B cell (primary cell): ENCODE measurements at regions of chr13 and their contacts with region 1.

Region 1: DNA sequence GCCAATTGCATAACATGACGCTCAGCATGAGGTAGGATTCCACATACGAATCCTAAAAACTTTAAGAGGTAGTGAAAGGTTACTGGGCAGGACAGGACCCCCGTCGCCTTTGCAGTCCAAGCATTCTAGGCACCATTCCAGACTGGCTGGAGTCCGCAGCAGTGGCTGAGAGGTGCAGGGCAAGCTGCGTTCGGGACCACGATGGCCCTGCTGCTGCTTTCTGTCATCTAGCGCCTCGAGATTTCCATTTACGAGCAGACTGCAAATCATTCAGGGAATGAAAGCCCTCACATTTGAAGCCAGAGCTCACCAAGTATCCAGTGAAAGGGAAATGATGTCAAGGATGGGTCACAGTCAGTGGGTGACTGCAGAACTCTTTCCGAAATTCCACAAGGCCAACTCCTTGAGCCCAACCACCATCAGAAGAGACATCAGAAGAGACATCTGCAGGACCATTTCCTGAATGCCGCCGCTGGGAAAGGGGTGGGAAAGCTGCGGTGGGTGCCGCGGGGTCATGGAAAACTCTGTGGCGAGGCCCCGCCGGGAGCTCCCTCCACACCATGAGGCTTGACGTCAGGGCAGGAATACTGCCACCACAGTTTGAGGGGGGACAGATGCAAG is 88.3 kb downstream of the COL4A1 start:
- DNase-seq: no peak
- ATAC-seq: no peak
- H3K4me3 ChIP-seq: no peak overlapping the region
- H3K4me3 Mint-ChIP-seq: no peak overlapping the region
- H3K27ac ChIP-seq: no peak overlapping the region
- H3K27ac Mint-ChIP-seq: no peak overlapping the region
- H3K4me1 ChIP-seq: no peaks in the 10 kb centered on the region
- H3K4me1 Mint-ChIP-seq: no peaks in the 10 kb centered on the region
- H3K27me3 ChIP-seq: peaks cover 0 to 3% (median 0%) of the 10 kb centered on the region in 4 experiments
- H3K27me3 Mint-ChIP-seq: peaks cover 3% of the 10 kb centered on the region
- CTCF ChIP-seq: no peak

Region 2: DNA sequence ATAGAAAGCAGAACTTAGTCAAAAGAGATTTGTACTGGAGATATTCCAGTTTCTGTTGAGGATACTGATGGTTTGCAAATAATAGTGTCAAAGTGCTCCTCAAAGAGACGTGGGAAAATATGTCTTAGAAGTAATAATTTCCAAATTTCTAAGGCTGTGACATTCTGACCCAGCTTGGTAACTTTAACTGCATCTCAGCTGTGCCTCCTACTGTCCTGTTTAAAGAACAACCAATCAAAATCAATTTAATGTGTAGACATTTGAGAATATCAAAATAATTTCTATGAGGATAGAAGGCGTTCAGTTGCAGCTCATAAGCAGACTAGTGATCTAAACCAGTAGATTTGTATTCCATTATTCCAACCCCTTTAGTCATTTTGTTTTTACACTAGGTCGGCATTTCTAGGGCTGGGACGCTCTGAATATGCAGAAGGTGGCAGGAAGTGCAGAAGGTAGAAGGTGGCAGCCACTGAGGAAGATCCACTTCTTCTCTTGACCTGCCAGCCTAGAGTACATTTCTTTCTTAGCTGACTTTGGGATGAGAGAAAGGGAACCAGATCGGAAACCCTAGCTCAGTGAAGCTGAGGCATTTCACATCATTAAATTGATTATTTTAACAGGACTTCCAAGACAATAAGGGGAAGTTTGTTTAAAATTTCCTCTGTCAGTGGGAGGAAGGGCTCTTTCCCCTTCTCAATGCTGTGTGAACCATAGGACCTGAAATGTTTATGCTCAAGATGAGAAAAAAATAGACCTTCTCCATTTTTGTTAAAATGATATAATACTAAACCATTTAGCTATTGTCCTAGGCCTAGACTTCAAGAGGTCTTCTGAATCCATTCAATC is 20.8 kb after region 1 on chr13:
- CTCF ChIA-PET with region 1: interaction called, 17 read pairs
- POLR2A ChIA-PET with region 1: no interaction called
- intact Hi-C with region 1: no loop called
- DNase-seq: no peak
- ATAC-seq: no peak
- H3K4me3 ChIP-seq: no peak overlapping the region
- H3K4me3 Mint-ChIP-seq: no peak overlapping the region
- H3K27ac ChIP-seq: no peak overlapping the region
- H3K27ac Mint-ChIP-seq: no peak overlapping the region
- H3K4me1 ChIP-seq: no peaks in the 10 kb centered on the region
- H3K4me1 Mint-ChIP-seq: no peaks in the 10 kb centered on the region
- H3K27me3 ChIP-seq: no peaks in the 10 kb centered on the region
- H3K27me3 Mint-ChIP-seq: peaks cover 18% of the 10 kb centered on the region
- CTCF ChIP-seq: no peak

Region 3: GRCh38 chr13:110412132-110412914 is 193.6 kb after region 1 on chr13:
- CTCF ChIA-PET with region 1: interaction called, 59 read pairs
- POLR2A ChIA-PET with region 1: no interaction called
- intact Hi-C with region 1: no loop called
- DNase-seq: peak; percentile 63
- ATAC-seq: peak; percentile 83
- H3K4me3 ChIP-seq: no peak overlapping the region
- H3K4me3 Mint-ChIP-seq: no peak overlapping the region
- H3K27ac ChIP-seq: no peak overlapping the region
- H3K27ac Mint-ChIP-seq: no peak overlapping the region
- H3K4me1 ChIP-seq: peaks cover 0 to 3% of the 10 kb centered on the region in 2 donors
- H3K4me1 Mint-ChIP-seq: peaks cover 4% of the 10 kb centered on the region
- H3K27me3 ChIP-seq: peaks cover 0 to 15% (median 6%) of the 10 kb centered on the region in 4 experiments
- H3K27me3 Mint-ChIP-seq: peaks cover 40% of the 10 kb centered on the region
- CTCF ChIP-seq: peak; percentile 84

Region 4: DNA sequence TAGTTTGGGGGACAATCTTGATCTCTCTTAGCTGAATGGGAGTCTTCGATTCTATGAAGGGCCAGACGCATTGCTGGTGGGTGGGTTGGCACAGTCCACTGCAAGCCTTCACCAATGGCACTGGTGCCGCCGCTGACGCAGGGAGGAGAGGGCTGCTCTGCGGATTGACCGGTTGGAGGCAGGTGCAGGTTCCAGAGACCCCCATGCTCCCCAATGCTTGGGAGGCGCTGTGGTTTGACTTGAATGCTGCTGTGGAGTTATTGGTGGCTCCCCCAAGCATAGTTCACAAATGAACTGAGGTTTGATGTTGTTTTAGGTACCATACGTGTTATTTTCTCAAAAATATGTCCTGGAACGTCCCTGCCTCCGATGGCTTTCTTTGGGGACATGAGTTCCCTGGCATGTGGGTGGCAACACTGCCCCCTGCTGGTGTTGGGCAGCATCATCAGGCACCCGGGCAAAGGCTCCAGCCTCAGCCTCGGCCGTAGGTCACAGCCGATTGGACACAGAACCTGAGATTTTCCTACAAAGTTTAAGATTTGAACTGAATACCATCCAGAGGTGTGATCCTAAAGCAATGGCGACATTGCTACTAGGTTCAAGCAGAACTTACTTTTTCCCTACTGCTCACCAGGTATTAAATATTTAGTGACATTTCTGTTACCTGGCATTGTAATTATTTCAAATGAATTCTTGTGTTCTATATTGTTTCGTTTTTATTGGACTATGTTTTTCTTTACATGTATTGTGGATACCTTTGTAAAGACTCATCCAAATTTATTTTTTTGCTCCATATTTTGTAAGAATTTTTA is 600.7 kb after region 1 on chr13:
- CTCF ChIA-PET with region 1: interaction called, 6 read pairs
- POLR2A ChIA-PET with region 1: no interaction called
- intact Hi-C with region 1: loop called (anchors 5 kb)
- DNase-seq: peak; percentile 82
- ATAC-seq: peak; percentile 84
- H3K4me3 ChIP-seq: no peak overlapping the region
- H3K4me3 Mint-ChIP-seq: no peak overlapping the region
- H3K27ac ChIP-seq: no peak overlapping the region
- H3K27ac Mint-ChIP-seq: no peak overlapping the region
- H3K4me1 ChIP-seq: peaks cover 0 to 7% of the 10 kb centered on the region in 2 donors
- H3K4me1 Mint-ChIP-seq: peaks cover 3% of the 10 kb centered on the region
- H3K27me3 ChIP-seq: peaks cover 0 to 3% (median 0%) of the 10 kb centered on the region in 4 experiments
- H3K27me3 Mint-ChIP-seq: peaks cover 8% of the 10 kb centered on the region
- CTCF ChIP-seq: peak; percentile 99

Region 5: GRCh38 chr13:111216166-111216960 is 997.7 kb after region 1 on chr13:
- CTCF ChIA-PET with region 1: no interaction called
- POLR2A ChIA-PET with region 1: no interaction called
- intact Hi-C with region 1: loop called (anchors 5 kb)
- DNase-seq: peak; percentile 61
- ATAC-seq: peak; percentile 74
- H3K4me3 ChIP-seq: no peak overlapping the region
- H3K4me3 Mint-ChIP-seq: no peak overlapping the region
- H3K27ac ChIP-seq: no peak overlapping the region
- H3K27ac Mint-ChIP-seq: peak overlapping the region; percentile 55
- H3K4me1 ChIP-seq: peaks cover 18 to 31% of the 10 kb centered on the region in 2 donors
- H3K4me1 Mint-ChIP-seq: peaks cover 47% of the 10 kb centered on the region
- H3K27me3 ChIP-seq: no peaks in the 10 kb centered on the region
- H3K27me3 Mint-ChIP-seq: no peaks in the 10 kb centered on the region
- CTCF ChIP-seq: peak; percentile 62